ENCODE measurements at regions of chr17 and their contacts with region 1.

Region 1: GRCh38 chr17:72725433-72726068 is 366.9 kb downstream of the SLC39A11 start:
- DNase-seq: peak; percentile 56
- H3K4me3 ChIP-seq: no peak overlapping the region
- H3K27ac ChIP-seq: no peak overlapping the region
- H3K4me1 ChIP-seq: peaks cover 19% of the 10 kb centered on the region
- H3K27me3 ChIP-seq: no peaks in the 10 kb centered on the region
- CTCF ChIP-seq: peak; percentile 82 to 87

Region 2: GRCh38 chr17:71118039-71118438 is 1607.5 kb before region 1 on chr17:
- CTCF ChIA-PET with region 1: no interaction called
- dilution Hi-C with region 1: no loop called
- in situ Hi-C with region 1: no loop called
- intact Hi-C with region 1: loop called (anchors 5 kb)
- DNase-seq: peak; percentile 62
- H3K4me3 ChIP-seq: no peak overlapping the region
- H3K27ac ChIP-seq: peak overlapping the region; percentile 15
- H3K4me1 ChIP-seq: peaks cover 11% of the 10 kb centered on the region
- H3K27me3 ChIP-seq: no peaks in the 10 kb centered on the region
- CTCF ChIP-seq: peak; percentile 68 to 73

Region 3: DNA sequence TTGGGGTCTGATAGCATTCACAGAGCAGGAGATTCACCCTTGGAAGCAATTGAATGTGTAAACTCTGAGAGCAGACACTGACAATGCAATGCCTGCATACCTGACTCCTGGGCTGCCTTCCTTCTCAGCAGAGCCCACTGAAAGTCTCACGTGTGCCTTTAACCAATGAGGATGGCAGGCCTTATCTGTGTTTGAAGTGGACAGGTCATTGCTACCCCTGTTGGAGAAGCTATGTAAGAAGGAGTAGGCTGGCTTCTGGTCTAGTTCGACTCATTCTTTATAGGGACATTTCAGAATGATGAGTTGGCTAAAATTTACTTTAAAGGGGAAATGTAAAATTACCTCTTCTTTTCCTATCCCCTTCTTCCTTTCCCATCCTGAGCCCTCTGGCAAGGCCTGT is 79.4 kb before region 1 on chr17:
- CTCF ChIA-PET with region 1: interaction called, 14 read pairs
- dilution Hi-C with region 1: no loop called
- in situ Hi-C with region 1: no loop called
- intact Hi-C with region 1: no loop called
- DNase-seq: no peak
- H3K4me3 ChIP-seq: no peak overlapping the region
- H3K27ac ChIP-seq: no peak overlapping the region
- H3K4me1 ChIP-seq: no peaks in the 10 kb centered on the region
- H3K27me3 ChIP-seq: no peaks in the 10 kb centered on the region
- CTCF ChIP-seq: no peak

Region 4: GRCh38 chr17:73092523-73093135 is 367.1 kb after region 1 on chr17 and contains the start of gene SLC39A11:
- CTCF ChIA-PET with region 1: no interaction called
- dilution Hi-C with region 1: no loop called
- in situ Hi-C with region 1: no loop called
- intact Hi-C with region 1: loop called (anchors 5 kb)
- DNase-seq: peak; percentile 91
- H3K4me3 ChIP-seq: peak within 1 kb of the TSS; percentile 56 to 72 (median 66)
- H3K27ac ChIP-seq: no peak within 1 kb of the TSS
- H3K4me1 ChIP-seq: peaks cover 7% of the 10 kb centered on the region
- H3K27me3 ChIP-seq: no peaks in the 10 kb centered on the region
- CTCF ChIP-seq: no peak
- total RNA-seq, gene SLC39A11: 20.0 to 24.8 TPM

Region 5: DNA sequence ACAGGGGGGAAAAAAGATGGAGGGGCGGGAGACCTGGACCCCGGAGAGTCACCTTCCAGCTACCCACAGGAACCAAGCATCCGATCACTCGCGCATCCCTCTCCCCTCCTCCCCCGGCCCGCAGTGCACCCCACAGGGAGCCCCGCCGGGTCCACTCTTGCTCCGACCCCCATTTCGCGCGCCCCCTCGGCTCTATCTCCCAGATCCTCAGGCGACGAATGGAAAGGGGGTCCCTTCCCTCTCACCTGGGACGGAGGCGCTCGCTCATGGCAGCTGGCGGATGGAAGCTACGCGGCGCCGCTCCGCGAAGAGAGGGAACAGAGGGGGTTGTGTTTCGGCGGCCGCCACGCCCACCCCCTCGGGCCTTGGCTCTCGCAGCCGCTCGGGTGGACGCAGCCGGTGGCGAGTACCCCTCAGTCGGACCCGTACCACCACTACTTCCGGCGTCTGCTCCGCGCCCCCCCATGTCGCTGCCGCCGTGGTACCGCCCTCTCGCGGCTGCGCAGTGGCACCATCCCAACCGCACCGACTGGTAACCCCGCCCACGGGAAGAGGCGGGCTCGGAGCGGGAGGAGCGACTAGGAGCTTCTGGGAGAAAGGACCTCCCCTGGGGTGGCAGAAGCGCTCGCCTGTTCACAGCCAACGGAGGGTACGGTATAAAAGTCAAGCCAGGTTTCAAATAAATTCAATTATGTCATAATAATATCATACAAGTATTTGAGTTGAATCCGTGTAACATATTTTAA is 506.5 kb after region 1 on chr17:
- CTCF ChIA-PET with region 1: interaction called, 16 read pairs
- dilution Hi-C with region 1: no loop called
- in situ Hi-C with region 1: no loop called
- intact Hi-C with region 1: loop called (anchors 5 kb)
- DNase-seq: peak; percentile 90
- H3K4me3 ChIP-seq: peak overlapping the region; percentile 95 to 100 (median 99)
- H3K27ac ChIP-seq: peak overlapping the region; percentile 72
- H3K4me1 ChIP-seq: peaks cover 37% of the 10 kb centered on the region
- H3K27me3 ChIP-seq: no peaks in the 10 kb centered on the region
- CTCF ChIP-seq: peak in 1 of 2 donors; percentile 25

Region 6: GRCh38 chr17:73371285-73371684 is 645.7 kb after region 1 on chr17:
- CTCF ChIA-PET with region 1: no interaction called
- dilution Hi-C with region 1: no loop called
- in situ Hi-C with region 1: loop called in 1 of 2 experiments (anchors 25 kb)
- intact Hi-C with region 1: loop called (anchors 1 kb)
- DNase-seq: peak; percentile 71
- H3K4me3 ChIP-seq: no peak overlapping the region
- H3K27ac ChIP-seq: no peak overlapping the region
- H3K4me1 ChIP-seq: peaks cover 6% of the 10 kb centered on the region
- H3K27me3 ChIP-seq: no peaks in the 10 kb centered on the region
- CTCF ChIP-seq: no peak

Measured in mammary epithelial cell (primary cell).